Posterior cingulate gyrus (tissue), 11 donors: ENCODE measurements at regions of chr7 and their contacts with region 1.

Region 1: GRCh38 chr7:155763691-155764437 is 48.4 kb downstream of the SHH start:
- DNase-seq: peak in 1 of 10 donors; percentile 75

Region 2: GRCh38 chr7:154913638-154914312 is 850.1 kb before region 1 on chr7:
- intact Hi-C with region 1: loop called (anchors 10 kb)
- DNase-seq: peak; percentile 78 to 98 (median 92)

Region 3: GRCh38 chr7:155598810-155599210 is 165.1 kb before region 1 on chr7:
- intact Hi-C with region 1: loop called (anchors 1 kb)
- DNase-seq: peak; percentile 64 to 97 (median 90)

Region 4: DNA sequence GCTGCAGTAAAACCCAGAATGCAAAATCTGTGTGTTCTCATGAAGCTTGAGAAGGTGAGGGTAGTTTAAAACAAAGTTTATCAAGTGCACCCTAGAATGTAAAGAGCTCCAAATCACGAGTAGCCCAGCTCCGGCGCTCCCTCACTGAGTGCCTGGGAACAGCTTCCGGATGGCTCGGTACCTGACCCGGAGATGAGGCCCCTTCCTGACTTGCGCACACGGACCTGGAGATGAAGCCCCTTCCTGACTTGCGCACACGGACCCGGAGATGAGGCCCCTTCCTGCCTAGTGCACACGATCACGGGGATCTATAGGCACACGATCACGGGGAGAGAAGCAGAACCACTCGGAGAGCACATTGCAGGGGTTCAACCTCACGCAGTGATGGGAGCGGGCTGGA is 554.6 kb after region 1 on chr7:
- intact Hi-C with region 1: no loop called
- DNase-seq: no peak